ENCODE measurements at regions of chr12 and their contacts with region 1.

Region 1: GRCh38 chr12:118061011-118061875 is at the start of gene WSB2:
- DNase-seq: peak; percentile 50 to 67
- ATAC-seq: peak; percentile 49 to 62 (median 55)
- H3K4me3 ChIP-seq: peak within 1 kb of the TSS; percentile 95
- H3K4me3 Mint-ChIP-seq: peak within 1 kb of the TSS; percentile 90
- H3K27ac ChIP-seq: peak within 1 kb of the TSS; percentile 97
- H3K27ac Mint-ChIP-seq: peak within 1 kb of the TSS; percentile 93 to 95
- H3K4me1 ChIP-seq: peaks cover 33% of the 10 kb centered on the region
- H3K4me1 Mint-ChIP-seq: peaks cover 43 to 53% of the 10 kb centered on the region in 2 donors
- H3K27me3 ChIP-seq: no peaks in the 10 kb centered on the region
- H3K27me3 Mint-ChIP-seq: peaks cover 5 to 19% of the 10 kb centered on the region in 2 donors
- CTCF ChIP-seq: no peak
- total RNA-seq, gene WSB2: 25.5 to 29.5 (median 28.8) TPM

Region 2: DNA sequence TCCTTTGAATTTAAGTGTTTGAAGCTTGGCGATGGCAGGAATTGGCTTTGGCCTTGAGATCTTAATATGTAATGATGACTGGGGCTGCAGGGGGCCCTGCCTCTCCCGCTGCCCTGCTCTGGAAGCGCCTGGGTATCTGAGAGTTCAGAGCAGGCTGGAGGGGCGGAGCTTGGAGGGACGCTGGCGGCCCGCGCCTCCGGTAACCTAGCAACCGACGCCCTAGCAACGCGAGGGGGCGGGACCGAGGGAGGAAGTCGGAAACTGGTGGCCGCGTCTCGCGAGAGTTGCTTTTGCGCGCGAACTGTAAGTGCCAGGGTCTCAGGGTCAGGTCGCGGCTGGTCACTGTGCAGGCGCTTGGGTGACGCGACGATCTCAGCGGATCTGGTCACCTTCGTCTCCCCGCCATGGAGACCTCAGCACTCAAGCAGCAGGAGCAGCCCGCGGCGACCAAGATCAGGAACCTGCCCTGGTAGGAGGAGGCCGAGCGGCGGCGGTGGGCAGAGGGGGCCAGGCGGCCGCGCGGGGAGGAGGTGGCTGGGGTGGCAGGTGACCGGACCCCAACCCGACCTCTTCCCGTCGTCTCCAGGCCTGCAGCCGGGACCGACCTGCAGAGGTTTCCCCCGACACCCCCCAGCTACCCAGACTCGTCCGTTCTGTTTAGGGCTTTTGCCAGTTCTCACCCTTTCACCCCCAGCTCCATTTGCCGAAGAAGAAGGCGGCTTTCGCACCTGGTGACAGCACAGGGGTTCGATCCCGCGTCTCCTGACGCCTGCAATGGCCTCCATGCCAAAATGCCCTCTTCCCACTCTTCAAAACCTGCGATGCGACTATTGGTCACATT is 44.6 kb before region 1 on chr12 and contains the start of gene RFC5:
- intact Hi-C with region 1: loop called (anchors 1 kb)
- DNase-seq: peak; percentile 98 to 99
- ATAC-seq: peak; percentile 98 to 99 (median 98)
- H3K4me3 ChIP-seq: peak within 1 kb of the TSS; percentile 77
- H3K4me3 Mint-ChIP-seq: peak within 1 kb of the TSS; percentile 96
- H3K27ac ChIP-seq: no peak within 1 kb of the TSS
- H3K27ac Mint-ChIP-seq: peak within 1 kb of the TSS; percentile 86 to 90
- H3K4me1 ChIP-seq: peaks cover 14% of the 10 kb centered on the region
- H3K4me1 Mint-ChIP-seq: peaks cover 19 to 21% of the 10 kb centered on the region in 2 donors
- H3K27me3 ChIP-seq: no peaks in the 10 kb centered on the region
- H3K27me3 Mint-ChIP-seq: peaks cover 0 to 6% of the 10 kb centered on the region in 2 donors
- CTCF ChIP-seq: no peak
- total RNA-seq, gene RFC5: 11.9 to 19.6 (median 15.8) TPM

Region 3: DNA sequence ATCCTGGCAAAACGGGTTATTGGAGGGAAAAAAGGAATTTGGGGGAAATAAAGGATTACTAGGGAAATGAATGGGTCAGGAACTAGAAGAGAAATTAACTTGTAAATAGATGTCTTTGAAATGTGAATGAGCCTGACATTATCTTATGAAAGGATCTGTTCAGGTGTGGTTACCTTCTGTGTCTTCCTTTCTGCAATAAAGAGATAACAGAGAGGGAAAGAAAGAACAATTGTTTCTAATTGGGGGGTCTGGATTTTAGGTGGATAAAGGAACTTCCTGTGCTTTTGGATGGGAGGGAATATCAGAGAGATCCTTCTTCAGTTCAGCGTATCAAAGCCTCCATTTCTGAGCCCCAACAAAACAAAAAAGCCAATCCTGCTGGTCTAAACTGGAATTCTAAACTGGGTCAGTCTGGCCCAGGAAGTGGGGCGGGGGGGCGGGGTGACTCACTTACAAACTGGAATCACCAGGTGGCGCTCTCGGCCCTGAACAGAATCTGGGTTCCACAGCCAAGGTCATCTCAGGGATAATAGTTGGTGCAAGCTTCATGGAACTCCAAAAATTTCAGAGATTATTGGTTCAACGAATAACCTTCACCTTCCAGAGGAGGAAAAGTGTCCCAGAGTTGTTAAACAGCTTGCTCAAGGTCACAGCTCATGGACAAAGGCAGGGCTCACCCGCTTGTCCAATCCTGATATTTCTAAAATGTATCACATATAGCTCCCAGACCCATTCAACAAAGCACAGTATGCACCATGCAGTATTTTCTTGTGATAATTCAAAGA is 59.5 kb after region 1 on chr12:
- intact Hi-C with region 1: loop called (anchors 5 kb)
- DNase-seq: peak; percentile 47 to 78
- ATAC-seq: peak; percentile 73 to 93 (median 80)
- H3K4me3 ChIP-seq: no peak overlapping the region
- H3K4me3 Mint-ChIP-seq: no peak overlapping the region
- H3K27ac ChIP-seq: peak overlapping the region; percentile 31
- H3K27ac Mint-ChIP-seq: peak overlapping the region; percentile 62 to 71
- H3K4me1 ChIP-seq: no peaks in the 10 kb centered on the region
- H3K4me1 Mint-ChIP-seq: peaks cover 9 to 11% of the 10 kb centered on the region in 2 donors
- H3K27me3 ChIP-seq: no peaks in the 10 kb centered on the region
- H3K27me3 Mint-ChIP-seq: no peaks in the 10 kb centered on the region
- CTCF ChIP-seq: peak; percentile 87

Measured in natural killer cell (primary cell).